Dendritic cell treated with granulocyte-macrophage colony-stimulating factor and Interleukin-4, amounts not matched to agents 40 ng/mL and 50 ng/mL, for 4 days (primary cell): ENCODE measurements at regions of chr7 and their contacts with region 1.

Region 1: GRCh38 chr7:146728611-146729010 is 612.0 kb downstream of the CNTNAP2 start:
- H3K4me3 Mint-ChIP-seq: no peak overlapping the region
- H3K27ac Mint-ChIP-seq: no peak overlapping the region
- H3K4me1 Mint-ChIP-seq: no peaks in the 10 kb centered on the region
- H3K27me3 Mint-ChIP-seq: no peaks in the 10 kb centered on the region

Region 2: DNA sequence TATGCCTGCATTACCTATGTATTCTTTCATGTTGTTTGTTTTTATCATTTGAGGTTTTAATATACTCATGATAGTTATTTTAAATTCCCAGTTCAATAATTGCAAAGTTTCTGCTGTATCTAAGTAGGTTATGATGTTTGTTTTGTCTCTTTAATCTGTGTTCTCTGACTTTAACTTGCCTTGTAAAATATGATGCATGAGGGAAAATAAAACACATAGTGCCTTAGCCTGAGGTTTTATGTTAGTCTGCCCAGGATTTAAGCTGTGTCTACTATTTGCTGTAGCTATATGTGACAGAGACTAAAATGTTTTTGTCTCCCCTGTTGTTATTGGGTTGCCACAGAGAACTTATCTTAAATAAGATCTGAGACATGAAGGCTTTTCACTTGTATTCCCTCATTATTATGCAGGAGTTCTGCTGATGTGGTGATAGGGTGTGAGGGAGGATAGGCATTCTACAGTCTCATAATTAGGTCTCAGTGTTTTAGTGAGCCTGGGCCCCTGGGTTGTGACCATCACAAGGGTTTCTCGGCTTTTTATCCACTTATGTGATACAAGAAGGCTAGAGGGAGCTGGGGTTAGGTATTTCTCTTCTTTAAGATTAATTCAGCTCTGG is 29.5 kb before region 1 on chr7:
- intact Hi-C with region 1: no loop called
- H3K4me3 Mint-ChIP-seq: no peak overlapping the region
- H3K27ac Mint-ChIP-seq: no peak overlapping the region
- H3K4me1 Mint-ChIP-seq: no peaks in the 10 kb centered on the region
- H3K27me3 Mint-ChIP-seq: no peaks in the 10 kb centered on the region

Region 3: DNA sequence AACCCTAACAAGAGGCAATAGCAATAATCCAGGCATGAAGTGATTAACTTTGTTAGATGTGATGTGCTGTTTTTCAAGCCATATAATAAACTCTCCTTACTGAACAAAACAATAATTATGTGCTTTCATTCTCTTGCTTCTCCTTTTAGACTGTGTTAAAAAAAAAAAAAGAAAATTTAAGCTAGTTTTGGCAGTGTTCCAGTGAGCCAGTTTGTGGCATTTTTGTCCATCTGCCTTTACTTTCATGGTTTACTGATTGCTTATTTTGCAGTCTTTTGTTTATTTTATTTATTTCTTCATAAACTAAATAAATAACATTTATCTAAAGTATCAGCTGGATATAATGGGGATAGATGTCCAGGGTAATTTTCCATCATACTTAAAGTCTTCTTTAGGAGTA is 13.3 kb after region 1 on chr7:
- intact Hi-C with region 1: loop called (anchors 1 kb)
- H3K4me3 Mint-ChIP-seq: no peak overlapping the region
- H3K27ac Mint-ChIP-seq: no peak overlapping the region
- H3K4me1 Mint-ChIP-seq: no peaks in the 10 kb centered on the region
- H3K27me3 Mint-ChIP-seq: no peaks in the 10 kb centered on the region

Region 4: DNA sequence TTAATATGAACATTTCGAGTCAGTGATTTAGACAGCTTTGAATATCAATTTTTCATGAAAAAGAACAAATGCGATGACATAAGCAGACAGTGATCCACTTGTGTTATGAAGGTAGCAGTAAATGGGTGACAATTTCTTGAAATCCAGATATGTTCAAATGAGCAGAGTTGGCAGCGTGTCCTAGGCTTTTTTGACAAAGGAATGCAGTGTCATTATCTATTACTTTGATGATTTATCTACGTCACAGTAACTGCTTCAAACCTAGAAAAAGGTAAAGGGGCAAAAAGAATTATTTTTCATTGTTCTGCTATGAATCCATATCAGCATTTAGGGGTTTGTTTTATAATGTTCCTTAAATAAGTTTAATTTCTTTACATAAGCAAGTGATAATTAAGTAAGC is 28.4 kb after region 1 on chr7:
- intact Hi-C with region 1: no loop called
- H3K4me3 Mint-ChIP-seq: no peak overlapping the region
- H3K27ac Mint-ChIP-seq: no peak overlapping the region
- H3K4me1 Mint-ChIP-seq: no peaks in the 10 kb centered on the region
- H3K27me3 Mint-ChIP-seq: no peaks in the 10 kb centered on the region

Region 5: DNA sequence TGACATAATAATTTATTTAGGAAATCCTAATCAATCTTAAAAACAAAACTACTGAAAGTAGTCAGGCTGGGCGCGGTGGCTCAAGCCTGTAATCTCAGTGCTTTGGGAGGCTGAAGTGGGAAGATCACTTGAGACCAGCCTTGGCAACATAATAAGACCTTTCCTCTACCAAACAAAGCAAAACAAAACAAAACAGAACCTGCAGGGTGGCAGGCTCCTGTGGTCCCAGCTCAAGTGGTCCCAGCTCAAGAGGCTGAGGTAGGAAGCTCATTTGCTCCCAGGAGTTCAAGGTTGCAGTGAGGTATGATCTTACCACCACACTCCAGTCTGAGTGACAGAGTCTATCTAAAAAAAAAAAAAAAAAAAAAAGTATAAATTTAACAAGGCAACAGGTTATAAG is 136.0 kb after region 1 on chr7:
- intact Hi-C with region 1: no loop called
- H3K4me3 Mint-ChIP-seq: no peak overlapping the region
- H3K27ac Mint-ChIP-seq: no peak overlapping the region
- H3K4me1 Mint-ChIP-seq: no peaks in the 10 kb centered on the region
- H3K27me3 Mint-ChIP-seq: no peaks in the 10 kb centered on the region